GM12878 (cell line): ENCODE measurements at regions of chr17 and their contacts with region 1.

Region 1: DNA sequence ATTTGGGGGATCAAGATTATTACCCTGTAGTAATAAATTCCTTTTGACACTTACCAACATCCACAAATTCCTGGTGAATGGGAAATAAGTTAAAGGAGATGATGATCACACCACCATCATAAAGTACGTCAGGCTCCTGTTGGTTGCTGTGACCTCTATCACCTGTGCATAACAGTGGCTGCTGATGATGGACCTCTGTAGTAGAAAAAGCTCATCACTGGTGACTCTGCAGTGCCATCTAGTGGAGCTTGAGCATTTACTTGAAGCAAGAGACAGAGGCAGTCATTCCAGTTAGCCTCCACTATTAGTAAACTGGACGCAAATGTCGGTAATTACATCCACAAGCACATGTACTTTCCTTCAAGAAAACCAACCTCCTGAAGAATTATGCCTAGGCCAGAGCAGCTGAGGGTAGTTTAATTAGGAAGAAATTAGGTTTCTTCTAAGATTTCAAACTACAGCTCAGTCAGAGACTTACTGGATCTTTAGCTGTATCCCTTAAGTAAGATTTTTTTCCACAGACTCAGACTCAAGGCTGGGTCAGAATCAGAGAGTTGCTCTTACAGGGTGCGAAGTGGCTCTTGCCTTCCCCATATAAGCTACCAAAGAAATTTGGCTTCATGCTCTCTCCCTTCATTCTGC is 39.3 kb downstream of the CYB561 start:
- DNase-seq: peak; percentile 40
- ATAC-seq: peak; percentile 99
- H3K4me3 ChIP-seq: no peak overlapping the region
- H3K27ac ChIP-seq: no peak overlapping the region
- H3K4me1 ChIP-seq: no peaks in the 10 kb centered on the region
- H3K27me3 ChIP-seq: peaks cover 0 to 1% of the 10 kb centered on the region in 2 experiments; a peak in 2 of 4 replicates
- CTCF ChIP-seq: peak; percentile 82 to 89 (median 89); a peak in 5 of 6 replicates
- EP300 ChIP-seq: no peak
- POLR2A ChIP-seq: no peak
- RAD21 ChIP-seq: peak; percentile 83

Region 2: GRCh38 chr17:62692721-62693483 is 713.9 kb before region 1 on chr17:
- CTCF ChIA-PET with region 1: no interaction called
- POLR2A ChIA-PET with region 1: no interaction called
- RAD21 ChIA-PET with region 1: no interaction called
- SMC1A ChIA-PET with region 1: no interaction called
- in situ Hi-C with region 1: loop called (anchors 10 kb)
- intact Hi-C with region 1: no loop called
- DNase-seq: no peak
- ATAC-seq: peak; percentile 67
- H3K4me3 ChIP-seq: no peak overlapping the region
- H3K27ac ChIP-seq: no peak overlapping the region
- H3K4me1 ChIP-seq: no peaks in the 10 kb centered on the region
- H3K27me3 ChIP-seq: no peaks in the 10 kb centered on the region
- CTCF ChIP-seq: peak; percentile 21 to 37 (median 30); a peak in 4 of 6 replicates
- EP300 ChIP-seq: no peak
- POLR2A ChIP-seq: no peak
- RAD21 ChIP-seq: no peak

Region 3: GRCh38 chr17:63082273-63082993 is 324.4 kb before region 1 on chr17:
- CTCF ChIA-PET with region 1: interaction called, 41 read pairs
- POLR2A ChIA-PET with region 1: no interaction called
- RAD21 ChIA-PET with region 1: interaction called, 16 read pairs
- SMC1A ChIA-PET with region 1: interaction called, 15 read pairs
- in situ Hi-C with region 1: loop called (anchors 5 kb)
- intact Hi-C with region 1: loop called (anchors 1 kb)
- DNase-seq: no peak
- ATAC-seq: no peak
- H3K4me3 ChIP-seq: no peak overlapping the region
- H3K27ac ChIP-seq: no peak overlapping the region
- H3K4me1 ChIP-seq: no peaks in the 10 kb centered on the region
- H3K27me3 ChIP-seq: no peaks in the 10 kb centered on the region
- CTCF ChIP-seq: peak; percentile 13 to 36 (median 16); a peak in 2 of 6 replicates
- EP300 ChIP-seq: no peak
- POLR2A ChIP-seq: no peak
- RAD21 ChIP-seq: peak; percentile 53

Region 4: GRCh38 chr17:63382826-63383225 is 24.0 kb before region 1 on chr17:
- CTCF ChIA-PET with region 1: interaction called, 10 read pairs
- POLR2A ChIA-PET with region 1: no interaction called
- RAD21 ChIA-PET with region 1: no interaction called
- SMC1A ChIA-PET with region 1: no interaction called
- in situ Hi-C with region 1: no loop called
- intact Hi-C with region 1: no loop called
- DNase-seq: no peak
- ATAC-seq: no peak
- H3K4me3 ChIP-seq: no peak overlapping the region
- H3K27ac ChIP-seq: no peak overlapping the region
- H3K4me1 ChIP-seq: no peaks in the 10 kb centered on the region
- H3K27me3 ChIP-seq: no peaks in the 10 kb centered on the region
- CTCF ChIP-seq: no peak
- EP300 ChIP-seq: no peak
- POLR2A ChIP-seq: no peak
- RAD21 ChIP-seq: no peak

Region 5: GRCh38 chr17:63425482-63425881 is 18.7 kb after region 1 on chr17:
- CTCF ChIA-PET with region 1: interaction called, 15 read pairs
- POLR2A ChIA-PET with region 1: no interaction called
- RAD21 ChIA-PET with region 1: no interaction called
- SMC1A ChIA-PET with region 1: interaction called, 3 read pairs
- in situ Hi-C with region 1: no loop called
- intact Hi-C with region 1: no loop called
- DNase-seq: peak; percentile 39
- ATAC-seq: peak; percentile 95
- H3K4me3 ChIP-seq: no peak overlapping the region
- H3K27ac ChIP-seq: no peak overlapping the region
- H3K4me1 ChIP-seq: no peaks in the 10 kb centered on the region
- H3K27me3 ChIP-seq: no peaks in the 10 kb centered on the region; a peak in 1 of 4 replicates
- CTCF ChIP-seq: peak; percentile 90 to 97 (median 90)
- EP300 ChIP-seq: no peak
- POLR2A ChIP-seq: no peak
- RAD21 ChIP-seq: peak; percentile 98

Region 6: GRCh38 chr17:63611354-63611753 is 204.5 kb after region 1 on chr17:
- CTCF ChIA-PET with region 1: interaction called, 6 read pairs
- POLR2A ChIA-PET with region 1: no interaction called
- RAD21 ChIA-PET with region 1: interaction called, 3 read pairs
- SMC1A ChIA-PET with region 1: interaction called, 10 read pairs
- in situ Hi-C with region 1: no loop called
- intact Hi-C with region 1: no loop called
- DNase-seq: no peak
- ATAC-seq: peak; percentile 55
- H3K4me3 ChIP-seq: no peak overlapping the region
- H3K27ac ChIP-seq: no peak overlapping the region
- H3K4me1 ChIP-seq: no peaks in the 10 kb centered on the region
- H3K27me3 ChIP-seq: no peaks in the 10 kb centered on the region
- CTCF ChIP-seq: no peak
- EP300 ChIP-seq: no peak
- POLR2A ChIP-seq: no peak
- RAD21 ChIP-seq: no peak